Posterior cingulate gyrus (tissue), 11 donors: ENCODE measurements at regions of chr7 and their contacts with region 1.

Region 1: DNA sequence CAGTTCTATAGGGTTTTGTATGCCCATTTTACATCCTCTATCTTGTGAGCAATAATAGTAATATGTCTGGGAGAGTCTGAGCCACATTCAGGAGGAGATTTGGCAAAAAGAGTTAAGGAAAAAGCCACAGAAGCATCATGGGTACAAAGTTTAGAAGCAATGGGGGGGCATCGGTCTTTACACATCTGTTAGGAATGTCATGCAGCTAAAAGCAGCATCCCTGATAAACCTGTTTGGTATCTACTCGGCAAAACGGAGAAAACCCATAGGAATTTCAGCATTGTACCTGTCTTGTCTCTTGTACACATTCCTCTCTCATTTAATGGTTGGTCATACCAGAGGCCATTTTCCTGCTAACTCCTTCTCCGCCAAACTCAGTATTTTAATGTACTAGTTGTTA is 12.5 kb upstream of the HERPUD2 start:
- DNase-seq: no peak

Region 2: GRCh38 chr7:35801392-35802101 is 94.1 kb after region 1 on chr7:
- intact Hi-C with region 1: loop called (anchors 2 kb)
- DNase-seq: peak; percentile 63 to 94 (median 72)

Region 3: GRCh38 chr7:35906191-35906908 is 198.9 kb after region 1 on chr7:
- intact Hi-C with region 1: loop called (anchors 1 kb)
- DNase-seq: peak in 5 of 10 donors; percentile 51 to 90 (median 64)

Region 4: GRCh38 chr7:35975851-35976454 is 268.5 kb after region 1 on chr7:
- intact Hi-C with region 1: loop called (anchors 5 kb)
- DNase-seq: peak in 3 of 10 donors; percentile 25 to 51 (median 30)